Colonic mucosa (tissue), 4 donors: ENCODE measurements at regions of chr5 and their contacts with region 1.

Region 1: GRCh38 chr5:141811287-141812155 is 66.7 kb downstream of the PCDH1 start:
- DNase-seq: no peak
- H3K4me3 ChIP-seq: no peak overlapping the region
- H3K27ac ChIP-seq: no peak overlapping the region
- H3K4me1 ChIP-seq: no peaks in the 10 kb centered on the region
- H3K27me3 ChIP-seq: no peaks in the 10 kb centered on the region
- CTCF ChIP-seq: peak; percentile 37

Region 2: GRCh38 chr5:141701360-141702119 is 110.0 kb before region 1 on chr5:
- intact Hi-C with region 1: loop called (anchors 2 kb)
- DNase-seq: no peak
- H3K4me3 ChIP-seq: peak overlapping the region; percentile 51
- H3K27ac ChIP-seq: no peak overlapping the region
- H3K4me1 ChIP-seq: peaks cover 7% of the 10 kb centered on the region
- H3K27me3 ChIP-seq: no peaks in the 10 kb centered on the region
- CTCF ChIP-seq: no peak

Region 3: DNA sequence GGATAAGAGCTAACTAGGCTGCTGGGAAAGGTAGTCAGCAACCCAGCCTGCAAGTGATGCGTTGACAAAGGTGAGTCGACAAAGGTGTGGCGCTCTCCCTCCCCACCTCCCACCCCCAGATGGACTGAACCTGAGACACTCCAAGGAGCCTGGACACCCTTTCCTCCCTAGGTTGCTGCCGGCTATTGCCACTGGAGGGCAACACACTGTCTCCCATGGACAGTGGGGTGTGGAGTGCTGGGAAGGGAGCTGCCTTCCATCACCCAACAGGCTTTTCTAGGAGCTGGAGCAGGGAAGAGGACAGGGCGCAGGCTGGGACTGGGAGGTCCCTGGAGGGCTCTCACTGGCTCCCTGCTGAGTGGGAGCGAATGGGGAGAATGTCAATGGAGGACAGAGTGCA is 54.1 kb before region 1 on chr5:
- intact Hi-C with region 1: no loop called
- DNase-seq: peak; percentile 37
- H3K4me3 ChIP-seq: no peak overlapping the region
- H3K27ac ChIP-seq: no peak overlapping the region
- H3K4me1 ChIP-seq: no peaks in the 10 kb centered on the region
- H3K27me3 ChIP-seq: peaks cover 9% of the 10 kb centered on the region
- CTCF ChIP-seq: peak; percentile 9

Region 4: GRCh38 chr5:141968914-141969608 is 157.5 kb after region 1 on chr5 and contains the start of gene RNF14:
- intact Hi-C with region 1: loop called (anchors 10 kb)
- DNase-seq: peak; percentile 95
- H3K4me3 ChIP-seq: peak within 1 kb of the TSS; percentile 62
- H3K27ac ChIP-seq: peak within 1 kb of the TSS; percentile 95
- H3K4me1 ChIP-seq: peaks cover 3% of the 10 kb centered on the region
- H3K27me3 ChIP-seq: no peaks in the 10 kb centered on the region
- CTCF ChIP-seq: peak; percentile 98
- total RNA-seq, gene RNF14: 49.4 to 69.8 TPM